ENCODE measurements at regions of chr7 and their contacts with region 1.

Region 1: GRCh38 chr7:27745064-27745583 is 5.2 kb downstream of the TAX1BP1 start:
- DNase-seq: peak; percentile 79
- ATAC-seq: peak; percentile 45
- H3K4me3 ChIP-seq: peak overlapping the region; percentile 41
- H3K27ac ChIP-seq: peak overlapping the region; percentile 32
- H3K4me1 ChIP-seq: peaks cover 35% of the 10 kb centered on the region
- H3K27me3 ChIP-seq: no peaks in the 10 kb centered on the region
- CTCF ChIP-seq: peak; percentile 80

Region 2: GRCh38 chr7:27662490-27663205 is 82.5 kb before region 1 on chr7 and contains the start of gene HIBADH:
- CTCF ChIA-PET with region 1: interaction called, 6 read pairs
- POLR2A ChIA-PET with region 1: interaction called, 6 read pairs
- intact Hi-C with region 1: loop called (anchors 2 kb)
- DNase-seq: peak; percentile 99
- ATAC-seq: peak; percentile 98
- H3K4me3 ChIP-seq: peak within 1 kb of the TSS; percentile 81
- H3K27ac ChIP-seq: peak within 1 kb of the TSS; percentile 60
- H3K4me1 ChIP-seq: 0 out of 2 replicates have a peak, but pooled peaks cover 7% of the 10 kb centered on the region
- H3K27me3 ChIP-seq: no peaks in the 10 kb centered on the region
- CTCF ChIP-seq: no peak
- total RNA-seq, gene HIBADH: 43.7 and 45.8 TPM in 2 replicates

Region 3: GRCh38 chr7:27759491-27759890 is 14.4 kb after region 1 on chr7:
- CTCF ChIA-PET with region 1: no interaction called
- POLR2A ChIA-PET with region 1: no interaction called
- intact Hi-C with region 1: loop called (anchors 1 kb)
- DNase-seq: peak; percentile 61
- ATAC-seq: peak; percentile 73
- H3K4me3 ChIP-seq: no peak overlapping the region
- H3K27ac ChIP-seq: peak overlapping the region; percentile 36
- H3K4me1 ChIP-seq: peaks cover 63% of the 10 kb centered on the region
- H3K27me3 ChIP-seq: no peaks in the 10 kb centered on the region
- CTCF ChIP-seq: no peak

Region 4: DNA sequence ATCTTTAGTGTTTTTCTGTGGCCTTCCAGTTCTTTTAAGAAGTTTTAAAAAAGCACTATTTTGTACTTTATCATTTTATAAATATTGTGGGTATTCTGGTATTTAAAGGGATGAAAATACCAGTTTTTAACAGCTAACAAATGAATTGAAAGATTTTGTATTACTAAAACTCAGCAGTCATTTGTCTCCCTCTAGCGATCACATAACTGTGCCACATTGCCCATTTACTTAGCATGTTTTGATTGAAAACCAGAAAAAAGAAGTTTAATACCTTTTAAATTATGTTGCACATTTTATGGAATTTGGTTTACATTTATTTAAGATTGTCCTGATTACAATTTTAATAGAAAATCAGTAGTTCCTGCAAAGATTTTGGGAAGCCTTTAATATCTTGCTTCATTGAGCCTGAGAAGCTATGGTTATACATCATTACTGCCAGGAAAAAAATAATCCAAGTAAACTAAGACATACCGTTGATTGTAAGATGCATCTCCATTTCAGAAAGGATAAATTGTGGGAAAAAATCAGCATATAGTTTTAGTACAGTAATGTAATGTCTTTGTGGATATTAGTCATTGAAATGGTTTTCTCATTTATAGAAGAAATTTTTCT is 29.7 kb after region 1 on chr7:
- CTCF ChIA-PET with region 1: interaction called, 44 read pairs
- POLR2A ChIA-PET with region 1: interaction called, 5 read pairs
- intact Hi-C with region 1: loop called (anchors 1 kb)
- DNase-seq: peak; percentile 70
- ATAC-seq: peak; percentile 58; the same call in 1 of the 2 replicates
- H3K4me3 ChIP-seq: no peak overlapping the region
- H3K27ac ChIP-seq: no peak overlapping the region
- H3K4me1 ChIP-seq: peaks cover 38% of the 10 kb centered on the region
- H3K27me3 ChIP-seq: no peaks in the 10 kb centered on the region
- CTCF ChIP-seq: peak; percentile 91

Region 5: GRCh38 chr7:27784393-27785053 is 39.4 kb after region 1 on chr7:
- CTCF ChIA-PET with region 1: interaction called, 3 read pairs
- POLR2A ChIA-PET with region 1: interaction called, 5 read pairs
- intact Hi-C with region 1: loop called (anchors 2 kb)
- DNase-seq: peak; percentile 96
- ATAC-seq: peak; percentile 97
- H3K4me3 ChIP-seq: no peak overlapping the region
- H3K27ac ChIP-seq: no peak overlapping the region
- H3K4me1 ChIP-seq: peaks cover 24% of the 10 kb centered on the region
- H3K27me3 ChIP-seq: no peaks in the 10 kb centered on the region
- CTCF ChIP-seq: peak; percentile 75

Measured in PC-3 (cell line).